Naive thymus-derived CD4-positive, alpha-beta T cell (primary cell): ENCODE measurements at regions of chr11 and their contacts with region 1.

Region 1: GRCh38 chr11:73647459-73648100 is 1.2 kb downstream of the PLEKHB1 start:
- DNase-seq: peak; percentile 81 to 96 (median 94)
- ATAC-seq: peak; percentile 100
- H3K4me3 ChIP-seq: peak overlapping the region; percentile 62
- H3K4me3 Mint-ChIP-seq: peak overlapping the region; percentile 71 to 96 (median 92)
- H3K27ac ChIP-seq: peak overlapping the region; percentile 71
- H3K27ac Mint-ChIP-seq: peak overlapping the region; percentile 83 to 98 (median 94)
- H3K4me1 ChIP-seq: peaks cover 7 to 15% of the 10 kb centered on the region in 2 donors
- H3K4me1 Mint-ChIP-seq: peaks cover 10 to 41% (median 34%) of the 10 kb centered on the region in 7 donors
- H3K27me3 ChIP-seq: no peaks in the 10 kb centered on the region
- H3K27me3 Mint-ChIP-seq: peaks cover 0 to 8% (median 0%) of the 10 kb centered on the region in 5 donors

Region 2: DNA sequence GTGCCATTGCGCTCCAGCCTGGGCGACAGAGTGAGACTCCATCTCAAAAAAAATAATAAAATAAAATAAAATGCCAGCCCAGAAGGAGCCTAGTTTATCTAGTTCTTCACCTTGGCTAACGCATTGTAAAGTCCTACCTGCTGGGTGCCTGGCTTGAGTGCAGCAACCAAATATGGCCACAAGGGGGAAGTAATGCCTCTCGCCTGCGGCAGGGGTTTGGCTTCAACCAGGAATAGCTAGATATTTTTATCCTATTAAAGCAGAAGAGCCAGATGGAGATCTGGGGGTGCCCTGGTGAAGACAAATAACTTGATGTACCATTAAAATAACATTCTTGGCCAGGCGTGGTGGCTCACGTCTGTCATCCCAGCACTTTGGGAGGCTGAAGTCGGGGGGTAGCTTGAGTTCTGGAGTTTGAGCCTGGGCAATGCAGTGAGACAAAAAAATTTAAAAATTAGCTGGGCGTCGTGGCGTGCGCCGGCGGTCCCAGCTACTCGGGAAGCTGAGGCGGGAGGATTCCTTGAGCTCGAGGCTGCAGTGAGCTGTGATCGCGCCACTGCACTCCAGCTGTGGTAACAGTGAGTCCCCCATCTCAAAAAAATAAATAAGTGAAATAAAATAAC is 21.8 kb before region 1 on chr11:
- CTCF ChIA-PET with region 1: interaction called, 27 read pairs
- POLR2A ChIA-PET with region 1: no interaction called
- intact Hi-C with region 1: loop called in 1 of 2 experiments (anchors 2 kb)
- DNase-seq: peak; percentile 38 to 75 (median 66)
- ATAC-seq: peak; percentile 88
- H3K4me3 ChIP-seq: no peak overlapping the region
- H3K4me3 Mint-ChIP-seq: peak overlapping the region in 1 of 10 donors; percentile 68
- H3K27ac ChIP-seq: no peak overlapping the region
- H3K27ac Mint-ChIP-seq: peak overlapping the region in 1 of 9 donors; percentile 59
- H3K4me1 ChIP-seq: peaks cover 0 to 3% of the 10 kb centered on the region in 2 donors
- H3K4me1 Mint-ChIP-seq: peaks cover 0 to 15% (median 0%) of the 10 kb centered on the region in 7 donors
- H3K27me3 ChIP-seq: no peaks in the 10 kb centered on the region
- H3K27me3 Mint-ChIP-seq: peaks cover 13 to 29% (median 27%) of the 10 kb centered on the region in 5 donors

Region 3: GRCh38 chr11:73633999-73634398 is 13.6 kb before region 1 on chr11:
- CTCF ChIA-PET with region 1: interaction called, 5 read pairs
- POLR2A ChIA-PET with region 1: interaction called, 14 read pairs
- intact Hi-C with region 1: loop called in 1 of 2 experiments (anchors 2 kb)
- DNase-seq: peak in 6 of 9 donors; percentile 18 to 40 (median 36)
- ATAC-seq: peak; percentile 41
- H3K4me3 ChIP-seq: no peak overlapping the region
- H3K4me3 Mint-ChIP-seq: peak overlapping the region in 8 of 10 donors; percentile 12 to 53 (median 30)
- H3K27ac ChIP-seq: peak overlapping the region; percentile 17
- H3K27ac Mint-ChIP-seq: peak overlapping the region; percentile 45 to 87 (median 71)
- H3K4me1 ChIP-seq: peaks cover 0 to 19% of the 10 kb centered on the region in 2 donors
- H3K4me1 Mint-ChIP-seq: peaks cover 9 to 26% (median 18%) of the 10 kb centered on the region in 7 donors
- H3K27me3 ChIP-seq: no peaks in the 10 kb centered on the region
- H3K27me3 Mint-ChIP-seq: no peaks in the 10 kb centered on the region

Region 4: GRCh38 chr11:73779084-73779902 is 131.7 kb after region 1 on chr11:
- CTCF ChIA-PET with region 1: no interaction called
- POLR2A ChIA-PET with region 1: interaction called, 3 read pairs
- intact Hi-C with region 1: loop called in 1 of 2 experiments (anchors 1 kb)
- DNase-seq: peak; percentile 88 to 98 (median 97)
- ATAC-seq: peak; percentile 99
- H3K4me3 ChIP-seq: peak overlapping the region; percentile 58
- H3K4me3 Mint-ChIP-seq: peak overlapping the region; percentile 86 to 97 (median 94)
- H3K27ac ChIP-seq: peak overlapping the region; percentile 89
- H3K27ac Mint-ChIP-seq: peak overlapping the region; percentile 94 to 100 (median 100)
- H3K4me1 ChIP-seq: peaks cover 0 to 6% of the 10 kb centered on the region in 2 donors
- H3K4me1 Mint-ChIP-seq: peaks cover 2 to 18% (median 9%) of the 10 kb centered on the region in 7 donors
- H3K27me3 ChIP-seq: no peaks in the 10 kb centered on the region
- H3K27me3 Mint-ChIP-seq: peaks cover 0 to 6% (median 0%) of the 10 kb centered on the region in 5 donors

Region 5: GRCh38 chr11:73995247-73995646 is 347.7 kb after region 1 on chr11:
- CTCF ChIA-PET with region 1: no interaction called
- POLR2A ChIA-PET with region 1: no interaction called
- intact Hi-C with region 1: no loop called
- DNase-seq: peak in 8 of 9 donors; percentile 16 to 93 (median 90)
- ATAC-seq: peak; percentile 85
- H3K4me3 ChIP-seq: peak overlapping the region; percentile 4
- H3K4me3 Mint-ChIP-seq: peak overlapping the region; percentile 65 to 92 (median 80)
- H3K27ac ChIP-seq: peak overlapping the region; percentile 92
- H3K27ac Mint-ChIP-seq: peak overlapping the region; percentile 93 to 100 (median 97)
- H3K4me1 ChIP-seq: peaks cover 33 to 45% of the 10 kb centered on the region in 2 donors
- H3K4me1 Mint-ChIP-seq: peaks cover 26 to 81% (median 71%) of the 10 kb centered on the region in 7 donors
- H3K27me3 ChIP-seq: no peaks in the 10 kb centered on the region
- H3K27me3 Mint-ChIP-seq: no peaks in the 10 kb centered on the region

Region 6: DNA sequence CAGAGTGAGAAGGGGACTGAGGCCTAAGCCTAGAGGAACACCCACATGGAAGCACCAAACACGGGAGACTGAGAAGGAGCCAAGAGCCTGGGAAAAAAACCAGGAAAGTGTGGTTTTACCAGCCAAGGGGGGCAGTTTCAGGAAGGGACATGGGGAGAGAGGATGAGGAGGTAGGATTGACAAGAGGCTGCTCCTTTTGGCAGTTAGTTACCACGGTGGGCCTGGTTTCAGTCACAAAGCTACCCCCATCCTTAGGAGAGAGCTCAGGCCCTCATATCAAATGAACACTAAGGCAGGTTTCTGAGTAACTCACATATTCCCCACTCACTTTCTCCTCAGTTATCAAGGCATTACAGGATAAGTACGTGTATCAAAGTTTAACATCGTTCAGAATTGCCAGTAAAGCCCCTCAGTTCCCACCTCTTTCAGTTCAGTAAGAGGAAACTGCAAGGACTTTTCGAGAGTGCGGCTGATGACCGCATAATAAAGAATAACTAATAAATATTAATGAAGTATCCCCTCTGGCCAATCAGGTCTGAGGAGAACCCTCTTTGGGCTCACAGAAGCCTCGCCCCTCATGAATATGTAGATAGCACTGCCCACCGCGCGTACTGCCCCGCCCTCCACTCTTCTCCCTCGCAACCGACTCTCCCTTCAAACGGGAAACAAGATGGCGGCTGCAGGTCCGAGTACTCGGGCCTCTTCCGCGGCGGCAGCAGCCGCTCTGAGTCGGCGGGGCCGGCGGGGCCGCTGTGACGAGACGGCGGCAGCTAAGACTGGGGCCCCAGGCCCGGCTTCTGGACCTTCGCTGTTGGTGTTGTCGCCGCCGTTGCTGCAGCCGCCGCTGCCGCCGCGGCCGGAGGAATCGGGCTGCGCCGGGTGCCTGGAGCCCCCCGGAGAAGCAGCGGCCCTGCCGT is 1100.9 kb after region 1 on chr11 and contains the start of gene RNF169:
- CTCF ChIA-PET with region 1: no interaction called
- POLR2A ChIA-PET with region 1: no interaction called
- intact Hi-C with region 1: loop called in 1 of 2 experiments (anchors 5 kb)
- DNase-seq: peak; percentile 59 to 88 (median 84)
- ATAC-seq: peak; percentile 100
- H3K4me3 ChIP-seq: peak within 1 kb of the TSS; percentile 73
- H3K4me3 Mint-ChIP-seq: peak within 1 kb of the TSS; percentile 81 to 99 (median 94)
- H3K27ac ChIP-seq: peak within 1 kb of the TSS; percentile 79
- H3K27ac Mint-ChIP-seq: peak within 1 kb of the TSS; percentile 84 to 97 (median 91)
- H3K4me1 ChIP-seq: peaks cover 16 to 29% of the 10 kb centered on the region in 2 donors
- H3K4me1 Mint-ChIP-seq: peaks cover 25 to 48% (median 42%) of the 10 kb centered on the region in 7 donors
- H3K27me3 ChIP-seq: no peaks in the 10 kb centered on the region
- H3K27me3 Mint-ChIP-seq: no peaks in the 10 kb centered on the region
- total RNA-seq, gene RNF169: 17.9 to 25.5 (median 22.2) TPM